Activated CD4-positive, alpha-beta T cell treated with anti-CD3 and anti-CD28 coated beads for 36 hours (primary cell): ENCODE measurements at regions of chr12 and their contacts with region 1.

Region 1: DNA sequence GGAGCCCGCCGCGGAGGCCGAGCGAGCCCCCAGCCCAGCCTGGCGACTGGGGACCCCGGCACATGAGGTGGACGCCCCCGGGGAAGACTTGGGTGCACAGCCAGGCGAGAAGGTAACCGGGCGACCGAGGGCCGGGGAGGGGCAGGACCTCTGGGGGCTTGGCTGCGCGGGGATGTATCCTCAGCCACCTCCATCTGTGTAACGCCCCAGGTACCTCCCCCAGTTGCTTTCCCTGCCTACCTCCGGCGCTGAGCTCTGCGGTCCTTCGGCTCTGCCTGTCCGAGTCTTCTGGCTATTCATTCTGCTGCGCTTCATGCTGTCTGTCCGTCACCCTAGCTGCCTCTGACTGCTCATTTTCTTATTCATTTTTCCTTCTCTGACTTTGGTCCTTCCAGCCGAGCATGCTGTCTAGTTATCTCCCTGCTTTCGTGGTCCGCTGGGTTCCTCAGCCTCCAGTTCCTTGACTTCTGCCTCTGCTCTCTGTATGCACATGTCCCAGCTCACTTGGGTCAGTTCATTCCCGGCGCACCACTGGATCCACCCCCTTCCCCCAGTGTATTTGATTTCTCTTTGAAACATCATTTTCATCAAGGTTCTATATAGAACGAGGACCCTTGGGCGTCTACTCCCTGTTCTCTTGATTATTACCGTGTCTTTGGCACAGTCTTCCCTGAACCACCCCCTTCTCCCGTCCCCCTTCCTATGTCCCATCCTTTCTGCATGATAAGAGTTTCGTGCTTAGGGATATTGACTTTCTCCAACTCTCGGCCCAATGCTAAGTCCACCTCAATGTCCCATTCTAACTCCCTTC is 612 bp downstream of the PHC1 start:
- DNase-seq: peak; percentile 69
- ATAC-seq: peak; percentile 82
- H3K4me3 Mint-ChIP-seq: no peak overlapping the region
- H3K27ac Mint-ChIP-seq: no peak overlapping the region
- H3K4me1 Mint-ChIP-seq: peaks cover 12% of the 10 kb centered on the region
- H3K27me3 Mint-ChIP-seq: no peaks in the 10 kb centered on the region

Region 2: GRCh38 chr12:8697476-8698131 is 217.3 kb before region 1 on chr12 and contains the start of gene RIMKLB:
- CTCF ChIA-PET with region 1: no interaction called
- POLR2A ChIA-PET with region 1: no interaction called
- intact Hi-C with region 1: loop called in 1 of 2 experiments (anchors 1 kb)
- DNase-seq: peak; percentile 82
- ATAC-seq: peak; percentile 93
- H3K4me3 Mint-ChIP-seq: peak within 1 kb of the TSS; percentile 86
- H3K27ac Mint-ChIP-seq: peak within 1 kb of the TSS; percentile 85
- H3K4me1 Mint-ChIP-seq: peaks cover 18% of the 10 kb centered on the region
- H3K27me3 Mint-ChIP-seq: peaks cover 2% of the 10 kb centered on the region
- total RNA-seq, gene RIMKLB: 5.2 to 5.3 TPM

Region 3: GRCh38 chr12:8936735-8937134 is 21.8 kb after region 1 on chr12:
- CTCF ChIA-PET with region 1: no interaction called
- POLR2A ChIA-PET with region 1: no interaction called
- intact Hi-C with region 1: no loop called
- DNase-seq: no peak
- ATAC-seq: no peak
- H3K4me3 Mint-ChIP-seq: no peak overlapping the region
- H3K27ac Mint-ChIP-seq: no peak overlapping the region
- H3K4me1 Mint-ChIP-seq: no peaks in the 10 kb centered on the region
- H3K27me3 Mint-ChIP-seq: no peaks in the 10 kb centered on the region